ENCODE measurements at regions of chr3 and their contacts with region 1.

Region 1: DNA sequence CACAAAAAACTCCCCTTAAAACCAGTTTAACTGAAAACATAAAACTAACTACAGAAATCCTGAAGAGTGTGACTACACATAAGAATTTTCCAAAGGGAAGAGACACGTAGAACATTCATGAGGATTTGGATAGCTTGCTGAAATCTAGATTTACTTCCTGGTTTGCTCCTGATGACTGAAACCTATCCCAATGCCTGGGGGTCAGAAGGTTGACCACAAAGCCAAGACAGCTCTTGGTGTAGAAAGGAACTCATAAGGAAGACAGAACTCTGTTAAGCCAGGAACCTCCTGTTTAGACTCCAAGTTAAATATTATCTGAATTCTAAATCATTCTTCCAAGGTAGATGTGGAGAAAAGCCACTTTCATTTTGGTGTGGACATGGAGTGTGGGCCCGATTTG is 92.8 kb downstream of the TFG start:
- DNase-seq: no peak
- ATAC-seq: no peak
- H3K4me3 ChIP-seq: no peak overlapping the region
- H3K27ac ChIP-seq: no peak overlapping the region
- H3K4me1 ChIP-seq: no peaks in the 10 kb centered on the region
- H3K27me3 ChIP-seq: no peaks in the 10 kb centered on the region
- CTCF ChIP-seq: no peak
- POLR2A ChIP-seq: no peak

Region 2: DNA sequence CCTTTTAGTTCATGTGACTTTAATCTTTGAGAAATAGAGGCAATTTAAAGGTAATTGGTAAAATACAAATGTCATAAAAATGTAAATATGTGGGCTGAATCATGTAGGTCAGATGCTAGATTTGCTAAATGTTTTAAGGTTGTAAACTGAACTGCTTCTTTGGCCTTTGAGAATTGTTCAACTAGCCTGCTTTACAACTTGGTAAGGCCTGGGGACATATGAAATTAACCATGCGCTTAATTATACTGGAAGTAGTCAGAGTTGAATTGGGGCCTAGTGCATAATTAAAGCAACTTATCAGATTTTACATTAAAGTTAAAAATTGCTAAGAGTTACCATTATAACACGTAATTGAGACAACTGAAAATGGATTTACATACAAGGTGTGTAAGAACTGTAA is 330.7 kb before region 1 on chr3:
- intact Hi-C with region 1: loop called in 1 of 2 experiments (anchors 10 kb)
- DNase-seq: no peak
- ATAC-seq: no peak
- H3K4me3 ChIP-seq: no peak overlapping the region
- H3K27ac ChIP-seq: no peak overlapping the region
- H3K4me1 ChIP-seq: no peaks in the 10 kb centered on the region
- H3K27me3 ChIP-seq: no peaks in the 10 kb centered on the region
- CTCF ChIP-seq: no peak
- POLR2A ChIP-seq: no peak